CD4-positive, alpha-beta T cell (primary cell): ENCODE measurements at regions of chr14 and their contacts with region 1.

Region 1: GRCh38 chr14:77314043-77314442 is 6.6 kb downstream of the POMT2 start:
- DNase-seq: no peak
- ATAC-seq: no peak
- H3K4me3 ChIP-seq: no peak overlapping the region
- H3K4me3 Mint-ChIP-seq: no peak overlapping the region
- H3K27ac ChIP-seq: no peak overlapping the region
- H3K27ac Mint-ChIP-seq: no peak overlapping the region
- H3K4me1 ChIP-seq: peaks cover 7% of the 10 kb centered on the region
- H3K4me1 Mint-ChIP-seq: peaks cover 5% of the 10 kb centered on the region
- H3K27me3 ChIP-seq: no peaks in the 10 kb centered on the region
- H3K27me3 Mint-ChIP-seq: no peaks in the 10 kb centered on the region
- CTCF ChIP-seq: no peak

Region 2: GRCh38 chr14:77151918-77152588 is 162.0 kb before region 1 on chr14:
- CTCF ChIA-PET with region 1: no interaction called
- POLR2A ChIA-PET with region 1: no interaction called
- intact Hi-C with region 1: loop called (anchors 1 to 2 kb)
- DNase-seq: peak in 3 of 14 experiments; percentile 22 to 42 (median 23)
- ATAC-seq: no peak
- H3K4me3 ChIP-seq: no peak overlapping the region
- H3K4me3 Mint-ChIP-seq: no peak overlapping the region
- H3K27ac ChIP-seq: no peak overlapping the region
- H3K27ac Mint-ChIP-seq: no peak overlapping the region
- H3K4me1 ChIP-seq: no peaks in the 10 kb centered on the region
- H3K4me1 Mint-ChIP-seq: no peaks in the 10 kb centered on the region
- H3K27me3 ChIP-seq: peaks cover 14 to 43% of the 10 kb centered on the region in 2 experiments
- H3K27me3 Mint-ChIP-seq: peaks cover 59% of the 10 kb centered on the region
- CTCF ChIP-seq: no peak

Region 3: GRCh38 chr14:77301103-77301502 is 12.9 kb before region 1 on chr14:
- CTCF ChIA-PET with region 1: interaction called, 18 read pairs
- POLR2A ChIA-PET with region 1: no interaction called
- intact Hi-C with region 1: no loop called
- DNase-seq: peak; percentile 27 to 69 (median 40)
- ATAC-seq: peak; percentile 48
- H3K4me3 ChIP-seq: no peak overlapping the region
- H3K4me3 Mint-ChIP-seq: no peak overlapping the region
- H3K27ac ChIP-seq: no peak overlapping the region
- H3K27ac Mint-ChIP-seq: no peak overlapping the region
- H3K4me1 ChIP-seq: no peaks in the 10 kb centered on the region
- H3K4me1 Mint-ChIP-seq: no peaks in the 10 kb centered on the region
- H3K27me3 ChIP-seq: no peaks in the 10 kb centered on the region
- H3K27me3 Mint-ChIP-seq: no peaks in the 10 kb centered on the region
- CTCF ChIP-seq: peak; percentile 60